ENCODE measurements at regions of chr5 and their contacts with region 1.

Region 1: GRCh38 chr5:57221049-57221568 is 47.2 kb downstream of the GPBP1 start:
- DNase-seq: no peak
- ATAC-seq: peak; percentile 72

Region 2: DNA sequence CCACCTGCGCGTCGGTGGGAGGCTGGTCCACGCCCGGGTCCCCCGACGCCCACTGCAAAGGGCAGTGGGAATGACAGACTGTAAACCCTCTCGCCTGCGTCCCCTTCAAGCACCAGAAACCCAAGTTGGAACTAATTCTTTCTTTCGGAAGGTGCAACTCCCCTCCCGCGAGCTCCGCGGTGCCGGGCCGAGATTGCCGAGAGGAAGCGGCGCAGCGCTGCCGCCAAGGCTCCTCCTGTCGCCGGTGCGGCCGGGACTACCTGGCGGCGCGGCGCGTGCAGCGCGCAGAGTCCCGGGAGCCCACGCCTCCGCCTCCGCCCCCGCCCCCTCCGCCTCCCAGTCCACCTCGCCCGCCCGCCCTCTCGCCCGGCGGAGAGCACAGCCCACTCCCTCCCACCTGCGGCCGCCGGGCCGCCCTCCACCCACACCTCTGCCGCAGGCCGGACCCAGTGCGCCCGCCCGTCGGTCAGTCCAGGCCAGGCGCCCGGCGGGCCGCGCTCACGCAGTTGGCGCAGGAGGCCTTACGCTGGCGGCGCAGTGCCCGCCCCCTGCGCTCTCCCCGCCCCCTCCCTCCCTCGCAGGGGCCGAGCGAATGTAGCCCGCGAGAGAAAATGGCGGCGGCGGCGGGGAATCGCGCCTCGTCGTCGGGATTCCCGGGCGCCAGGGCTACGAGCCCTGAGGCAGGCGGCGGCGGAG is 406.0 kb before region 1 on chr5 and contains the start of gene MAP3K1:
- intact Hi-C with region 1: no loop called
- DNase-seq: peak; percentile 93
- ATAC-seq: peak; percentile 92
- total RNA-seq, gene MAP3K1: 6.3 TPM

Region 3: GRCh38 chr5:56900858-56901578 is 320.1 kb before region 1 on chr5:
- intact Hi-C with region 1: loop called (anchors 2 kb)
- DNase-seq: no peak
- ATAC-seq: peak; percentile 46

Region 4: DNA sequence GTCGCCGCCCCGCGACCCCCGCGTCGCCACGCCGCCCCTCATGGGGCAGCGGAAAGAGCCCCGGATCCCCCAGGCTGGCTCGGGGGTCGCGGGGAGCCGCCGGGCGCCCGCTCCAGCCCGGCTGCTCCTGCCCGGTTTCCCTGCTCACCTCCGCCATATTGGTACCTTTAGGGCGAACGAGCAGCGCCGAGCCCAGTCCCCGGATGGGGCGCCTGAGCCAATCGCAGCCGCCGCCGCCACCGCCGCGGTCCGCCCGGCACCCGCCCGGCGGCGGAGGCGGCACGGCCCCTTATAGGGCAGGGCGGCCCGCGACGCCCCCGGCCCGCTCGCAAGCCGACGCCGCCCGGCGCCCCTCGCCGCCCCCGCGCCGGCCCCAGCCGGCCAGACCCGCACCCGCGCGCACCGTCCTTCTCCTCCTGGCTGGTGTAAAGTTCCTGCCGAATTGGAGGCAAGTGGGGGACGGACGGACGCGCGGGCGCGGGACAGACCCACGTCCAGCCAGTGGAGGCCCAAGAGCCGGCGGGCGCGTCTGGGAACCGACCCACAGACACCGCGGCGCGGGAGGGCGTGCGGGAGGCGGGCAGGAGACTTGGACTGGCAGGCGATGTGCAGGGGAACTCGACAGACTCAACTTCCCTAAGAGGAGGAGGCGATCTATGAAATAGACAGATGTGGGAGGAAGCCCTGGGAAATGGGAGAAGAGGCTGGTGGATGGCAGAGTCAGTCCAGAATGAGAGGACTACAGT is 269.0 kb before region 1 on chr5 and contains the start of gene MIER3:
- intact Hi-C with region 1: loop called (anchors 5 kb)
- DNase-seq: peak; percentile 90
- ATAC-seq: peak; percentile 96
- total RNA-seq, gene MIER3: 12.0 TPM

Region 5: GRCh38 chr5:57137401-57137800 is 83.7 kb before region 1 on chr5:
- intact Hi-C with region 1: loop called (anchors 2 kb)
- DNase-seq: no peak
- ATAC-seq: no peak

Region 6: DNA sequence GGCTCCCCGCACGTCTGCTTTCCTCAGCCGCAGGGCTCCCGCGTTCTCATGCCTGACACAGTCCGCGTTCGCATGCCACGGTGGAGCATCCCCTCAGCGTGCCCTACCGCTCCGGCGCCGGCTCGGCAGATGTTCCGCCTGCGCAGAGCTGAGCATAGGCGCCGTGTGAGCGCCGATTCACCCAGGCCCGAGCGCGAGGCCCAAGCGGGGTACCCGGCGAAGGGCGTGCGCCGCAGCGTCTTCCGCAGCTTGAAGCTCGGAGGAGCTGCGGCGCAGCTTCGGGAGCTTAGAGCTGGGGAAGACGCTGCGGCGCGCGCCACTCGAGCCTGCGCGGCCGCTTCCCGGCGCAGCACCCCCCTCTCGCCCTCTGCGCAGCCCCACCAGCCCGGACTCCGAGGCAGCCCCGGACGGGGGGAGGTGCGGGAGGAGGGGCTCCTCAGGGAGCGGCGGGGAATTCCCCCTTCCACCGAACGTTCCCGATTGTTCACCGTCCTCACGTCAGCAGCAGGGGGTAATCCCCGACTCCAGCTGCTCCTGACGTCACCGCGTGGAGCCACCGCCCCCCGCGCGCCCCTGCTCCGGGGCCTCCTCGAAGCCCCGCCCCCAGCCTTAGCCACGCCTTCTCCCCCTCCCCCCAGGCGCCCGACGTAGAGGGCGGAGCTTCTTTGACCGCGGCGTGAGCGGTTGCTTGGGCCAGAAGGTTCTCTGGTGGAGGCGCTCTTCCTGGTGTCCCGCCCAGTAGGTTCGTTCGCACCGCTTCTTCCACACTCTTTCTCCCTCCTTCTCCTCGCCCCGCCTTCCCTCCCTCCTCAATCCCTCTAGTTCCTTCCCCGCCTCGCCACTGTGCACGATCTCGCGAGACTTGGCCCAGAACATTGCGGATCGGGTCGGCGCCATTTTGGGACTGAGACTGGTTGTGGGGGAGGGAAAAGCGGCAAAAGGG is 47.7 kb before region 1 on chr5 and contains the start of gene GPBP1:
- intact Hi-C with region 1: loop called (anchors 5 kb)
- DNase-seq: peak; percentile 99
- ATAC-seq: peak; percentile 94
- total RNA-seq, gene GPBP1: 58.9 TPM

Measured in Right ventricle myocardium inferior (tissue), 1 donor.